ENCODE measurements at regions of chr3 and their contacts with region 1.

Region 1: DNA sequence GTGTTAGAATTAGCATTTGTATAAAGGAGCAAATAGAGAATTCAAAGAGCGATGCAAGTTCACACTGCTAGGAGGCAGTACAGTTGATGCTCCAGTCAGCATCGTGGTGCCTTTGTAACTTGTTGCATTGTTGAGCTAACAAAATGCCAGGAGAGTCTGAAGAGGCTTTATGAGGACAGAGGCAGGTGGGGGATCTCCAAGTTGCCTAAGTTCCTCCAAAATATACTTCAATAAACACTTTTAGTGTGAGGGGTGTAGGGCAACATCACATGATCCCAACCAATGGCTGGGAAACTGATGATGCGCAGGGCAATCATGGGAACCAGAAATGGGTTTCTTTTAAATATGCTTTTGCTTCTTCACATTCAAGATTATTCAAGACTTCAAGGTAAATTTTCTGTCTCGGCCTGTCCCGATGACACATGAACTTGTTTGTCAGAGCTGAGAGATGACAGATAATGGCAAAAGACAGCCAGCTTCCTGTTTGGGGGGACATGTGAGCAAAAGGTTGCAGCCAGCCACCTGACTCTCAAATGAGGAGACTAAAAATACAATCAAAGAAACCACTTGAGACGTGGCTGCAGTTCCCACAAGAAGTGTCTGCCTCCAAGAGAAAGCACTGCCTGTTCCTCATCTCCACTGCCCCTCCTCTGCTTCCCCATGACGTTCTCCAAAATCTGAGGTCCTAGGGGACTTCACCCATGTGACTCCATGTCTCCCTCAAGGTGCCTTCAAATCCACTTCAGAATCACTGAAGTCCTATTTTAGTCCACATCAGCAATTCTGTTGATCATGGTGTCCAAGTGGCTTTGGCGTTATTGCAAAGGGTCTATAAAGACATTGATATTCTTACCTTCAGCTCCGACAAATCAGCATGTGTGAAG is 39.3 kb downstream of the KLHL6 start:
- DNase-seq: peak; percentile 80
- H3K4me3 Mint-ChIP-seq: peak overlapping the region; percentile 17
- H3K27ac Mint-ChIP-seq: peak overlapping the region; percentile 90
- H3K4me1 Mint-ChIP-seq: peaks cover 81% of the 10 kb centered on the region
- H3K27me3 Mint-ChIP-seq: no peaks in the 10 kb centered on the region

Region 2: GRCh38 chr3:182843478-182843877 is 672.7 kb before region 1 on chr3:
- CTCF ChIA-PET with region 1: no interaction called
- intact Hi-C with region 1: no loop called
- DNase-seq: no peak
- H3K4me3 Mint-ChIP-seq: no peak overlapping the region
- H3K27ac Mint-ChIP-seq: no peak overlapping the region
- H3K4me1 Mint-ChIP-seq: no peaks in the 10 kb centered on the region
- H3K27me3 Mint-ChIP-seq: no peaks in the 10 kb centered on the region

Region 3: GRCh38 chr3:183317886-183318865 is 198.0 kb before region 1 on chr3:
- CTCF ChIA-PET with region 1: no interaction called
- intact Hi-C with region 1: no loop called
- DNase-seq: no peak
- H3K4me3 Mint-ChIP-seq: no peak overlapping the region
- H3K27ac Mint-ChIP-seq: no peak overlapping the region
- H3K4me1 Mint-ChIP-seq: peaks cover 16% of the 10 kb centered on the region
- H3K27me3 Mint-ChIP-seq: peaks cover 3% of the 10 kb centered on the region

Region 4: DNA sequence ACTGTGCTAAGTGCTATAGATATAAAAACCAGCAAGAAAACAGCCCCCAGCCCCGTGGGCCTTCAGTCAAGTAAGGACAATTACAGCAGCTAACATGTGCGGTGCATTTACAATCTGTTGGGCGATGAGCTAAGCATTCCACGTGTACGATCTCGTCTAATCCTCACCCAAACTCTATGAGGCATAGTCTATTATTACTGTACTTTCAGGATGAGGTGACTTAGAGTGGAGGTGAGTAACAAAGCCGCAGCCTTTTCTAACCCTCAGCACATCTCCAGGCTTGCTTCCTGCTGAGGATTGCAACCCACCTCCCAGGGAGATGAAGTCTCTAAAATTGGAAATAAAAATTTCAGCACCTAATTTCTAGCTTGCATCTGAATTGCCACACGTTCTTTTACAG is 34.6 kb before region 1 on chr3:
- CTCF ChIA-PET with region 1: no interaction called
- intact Hi-C with region 1: loop called (anchors 5 kb)
- DNase-seq: no peak
- H3K4me3 Mint-ChIP-seq: no peak overlapping the region
- H3K27ac Mint-ChIP-seq: no peak overlapping the region
- H3K4me1 Mint-ChIP-seq: peaks cover 6% of the 10 kb centered on the region
- H3K27me3 Mint-ChIP-seq: no peaks in the 10 kb centered on the region

Region 5: DNA sequence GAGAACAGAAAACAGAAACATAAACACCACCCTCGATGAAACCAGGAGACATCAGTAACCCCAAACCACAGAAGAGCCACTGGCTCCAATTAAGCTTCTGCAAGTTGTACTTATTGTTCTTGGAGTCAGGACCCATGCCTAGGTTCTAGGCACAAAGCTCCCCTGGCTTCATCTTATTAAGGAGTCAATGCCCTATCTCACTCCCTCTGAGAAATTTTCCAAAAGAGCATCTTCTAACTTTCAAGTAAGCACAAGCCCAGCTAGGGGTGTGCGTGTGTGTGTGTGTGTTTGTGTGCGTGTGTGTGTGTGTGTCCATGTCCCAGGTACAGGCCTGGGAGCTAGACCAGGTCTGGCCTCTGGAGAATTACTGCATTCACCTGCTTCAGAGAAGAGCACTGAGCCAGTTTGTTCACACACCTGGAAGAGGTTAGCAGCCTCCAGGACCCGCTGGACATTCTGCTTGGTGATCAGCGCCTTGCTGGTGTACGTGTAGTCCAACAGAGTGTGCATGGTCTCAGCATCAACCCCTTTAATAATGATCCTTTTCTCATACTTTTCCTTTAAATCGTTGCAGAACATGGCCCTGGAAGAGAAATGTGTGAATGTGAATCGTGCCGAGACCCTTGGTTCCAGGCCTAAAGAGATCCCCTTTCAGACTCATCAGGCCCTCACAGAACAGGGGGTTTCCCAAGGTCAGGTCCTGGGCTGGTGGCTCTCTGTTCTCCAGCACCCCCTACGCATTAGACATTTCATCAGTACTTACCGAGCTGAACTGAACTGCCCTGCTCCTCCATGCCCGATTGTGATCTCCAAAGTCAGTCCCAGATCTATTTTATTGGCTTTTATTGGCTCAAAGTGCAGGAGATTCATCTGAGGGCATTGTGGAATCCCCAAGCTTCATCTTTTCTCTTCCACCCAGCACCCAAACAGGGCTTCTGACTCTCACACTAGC is 11.5 kb after region 1 on chr3:
- CTCF ChIA-PET with region 1: interaction called, 4 read pairs
- intact Hi-C with region 1: loop called (anchors 1 kb)
- DNase-seq: peak; percentile 34
- H3K4me3 Mint-ChIP-seq: peak overlapping the region; percentile 16
- H3K27ac Mint-ChIP-seq: peak overlapping the region; percentile 85
- H3K4me1 Mint-ChIP-seq: peaks cover 56% of the 10 kb centered on the region
- H3K27me3 Mint-ChIP-seq: no peaks in the 10 kb centered on the region

Region 6: GRCh38 chr3:183591881-183592521 is 75.8 kb after region 1 on chr3:
- CTCF ChIA-PET with region 1: interaction called, 3 read pairs
- intact Hi-C with region 1: loop called (anchors 1 kb)
- DNase-seq: peak; percentile 19
- H3K4me3 Mint-ChIP-seq: peak overlapping the region; percentile 37
- H3K27ac Mint-ChIP-seq: peak overlapping the region; percentile 86
- H3K4me1 Mint-ChIP-seq: peaks cover 48% of the 10 kb centered on the region
- H3K27me3 Mint-ChIP-seq: no peaks in the 10 kb centered on the region

Measured in activated naive CD4-positive, alpha-beta T cell treated with anti-CD3 and anti-CD28 coated beads for 36 hours (primary cell).